Colonic mucosa (tissue), 4 donors: ENCODE measurements at regions of chr5 and their contacts with region 1.

Region 1: GRCh38 chr5:90932052-90932699 is 373.6 kb downstream of the ADGRV1 start:
- DNase-seq: peak; percentile 80
- H3K4me3 ChIP-seq: no peak overlapping the region
- H3K27ac ChIP-seq: no peak overlapping the region
- H3K4me1 ChIP-seq: no peaks in the 10 kb centered on the region
- H3K27me3 ChIP-seq: no peaks in the 10 kb centered on the region
- CTCF ChIP-seq: peak; percentile 73

Region 2: GRCh38 chr5:90866333-90866732 is 65.8 kb before region 1 on chr5:
- intact Hi-C with region 1: loop called (anchors 5 kb)
- DNase-seq: no peak
- H3K4me3 ChIP-seq: no peak overlapping the region
- H3K27ac ChIP-seq: no peak overlapping the region
- H3K4me1 ChIP-seq: no peaks in the 10 kb centered on the region
- H3K27me3 ChIP-seq: no peaks in the 10 kb centered on the region
- CTCF ChIP-seq: peak; percentile 38

Region 3: DNA sequence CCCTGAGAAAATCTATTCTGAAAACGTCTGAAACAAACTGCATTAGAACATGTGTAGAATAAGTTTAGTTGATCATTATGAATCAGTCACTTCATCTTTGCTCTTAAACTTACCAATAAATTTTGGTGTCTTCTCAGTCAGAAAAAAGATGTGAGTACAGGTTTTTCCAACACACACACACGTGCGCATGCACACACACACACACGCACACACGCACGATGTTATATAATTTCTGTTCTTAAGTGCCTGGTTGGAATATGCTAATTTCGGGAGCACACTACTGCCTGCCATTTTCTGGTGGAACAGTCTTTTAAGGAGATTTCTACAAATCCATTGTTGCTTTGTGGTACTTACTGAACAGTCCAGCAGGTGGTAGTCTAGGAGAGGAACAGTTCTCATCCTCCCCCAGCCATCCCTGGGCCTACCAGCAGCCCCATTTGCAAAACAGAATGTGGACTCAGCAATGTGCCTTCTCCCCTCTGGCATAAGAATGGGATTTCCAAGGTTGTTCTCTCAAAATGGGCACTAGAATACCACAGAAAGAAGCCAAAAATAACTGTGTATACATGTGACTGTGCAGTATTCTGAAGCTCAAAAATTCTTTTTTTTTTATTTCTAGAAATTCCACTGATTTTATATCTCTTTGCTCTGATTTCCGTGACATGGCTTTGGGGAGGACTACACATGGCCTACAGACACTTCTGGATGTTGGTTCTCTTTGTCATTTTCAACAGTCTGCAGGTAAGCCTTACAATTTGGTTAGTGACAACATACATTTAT is 169.6 kb after region 1 on chr5:
- intact Hi-C with region 1: loop called (anchors 2 kb)
- DNase-seq: peak; percentile 80
- H3K4me3 ChIP-seq: no peak overlapping the region
- H3K27ac ChIP-seq: no peak overlapping the region
- H3K4me1 ChIP-seq: peaks cover 3% of the 10 kb centered on the region
- H3K27me3 ChIP-seq: no peaks in the 10 kb centered on the region
- CTCF ChIP-seq: peak; percentile 60

Region 4: DNA sequence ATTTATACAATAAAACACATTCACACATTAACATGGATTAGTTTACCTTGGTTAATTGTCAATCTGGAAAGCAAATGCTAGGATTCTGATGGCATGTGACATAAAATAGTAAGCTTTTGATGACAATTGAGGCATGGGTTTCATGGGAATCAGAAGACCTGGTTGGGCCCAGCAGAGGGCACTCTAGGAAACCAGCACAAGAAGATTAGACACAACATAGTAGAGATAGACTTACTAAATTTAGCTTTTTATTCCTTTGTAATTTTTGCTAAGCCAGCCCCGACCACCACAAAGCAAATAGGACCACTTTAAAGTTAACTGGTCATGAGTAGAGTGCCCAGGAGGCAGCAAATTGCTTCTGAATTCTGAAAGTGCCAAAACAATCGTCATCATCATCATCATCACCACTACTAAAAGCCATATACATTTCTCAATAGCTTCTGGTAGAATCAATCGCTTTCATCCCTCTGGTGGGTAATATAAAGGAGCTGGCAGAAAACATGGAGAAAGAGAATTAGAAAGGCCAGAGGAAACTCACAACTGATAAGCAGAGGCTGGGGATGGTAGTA is 287.7 kb after region 1 on chr5:
- intact Hi-C with region 1: loop called (anchors 5 kb)
- DNase-seq: no peak
- H3K4me3 ChIP-seq: no peak overlapping the region
- H3K27ac ChIP-seq: no peak overlapping the region
- H3K4me1 ChIP-seq: peaks cover 4% of the 10 kb centered on the region
- H3K27me3 ChIP-seq: no peaks in the 10 kb centered on the region
- CTCF ChIP-seq: no peak

Region 5: GRCh38 chr5:91380491-91381238 is 448.5 kb after region 1 on chr5:
- intact Hi-C with region 1: loop called (anchors 5 kb)
- DNase-seq: peak; percentile 100
- H3K4me3 ChIP-seq: peak overlapping the region; percentile 81
- H3K27ac ChIP-seq: peak overlapping the region; percentile 100
- H3K4me1 ChIP-seq: peaks cover 11% of the 10 kb centered on the region
- H3K27me3 ChIP-seq: no peaks in the 10 kb centered on the region
- CTCF ChIP-seq: no peak

Region 6: DNA sequence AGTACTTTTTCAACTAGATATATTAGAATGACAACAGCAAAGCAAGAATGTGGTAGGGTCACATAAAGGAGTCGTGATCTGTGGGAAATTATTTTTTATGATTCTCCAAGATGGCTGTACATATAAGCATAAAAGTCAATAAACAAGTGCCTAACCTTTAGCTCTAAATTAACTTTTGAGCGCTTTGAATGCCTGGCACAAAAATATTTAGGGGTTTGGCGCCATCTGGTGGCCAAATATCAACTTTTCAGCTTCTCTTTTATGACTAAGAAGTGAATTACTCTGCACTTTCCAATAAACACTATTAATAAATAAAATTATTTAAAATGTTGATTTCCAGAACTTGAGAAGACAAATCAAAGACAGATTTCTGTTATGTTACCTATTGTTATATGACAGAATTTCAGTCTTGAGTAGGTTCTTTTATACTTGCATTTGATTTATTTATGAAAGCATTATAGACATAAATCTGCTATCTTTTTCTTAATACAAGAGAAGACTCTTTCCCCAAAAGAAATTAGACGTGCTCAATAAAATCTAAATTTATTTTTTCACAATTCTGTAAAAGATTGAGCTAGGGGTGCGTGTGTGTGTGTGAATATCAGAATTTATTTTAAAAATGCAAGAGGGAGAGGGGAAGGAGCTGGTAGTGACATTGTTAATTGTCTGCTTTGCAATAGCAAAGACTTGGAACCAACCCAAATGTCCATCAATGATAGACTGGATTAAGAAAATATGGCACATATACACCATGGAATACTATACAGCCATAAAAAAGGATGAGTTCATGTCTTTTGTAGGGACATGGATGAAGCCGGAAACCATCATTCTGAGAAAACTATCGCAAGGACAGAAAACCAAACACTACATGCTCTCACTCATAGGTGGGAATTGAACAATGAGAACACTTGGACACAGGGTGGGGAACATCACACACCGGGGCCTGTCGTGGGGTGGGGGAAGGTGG is 487.7 kb after region 1 on chr5:
- intact Hi-C with region 1: loop called (anchors 10 kb)
- DNase-seq: peak; percentile 74
- H3K4me3 ChIP-seq: no peak overlapping the region
- H3K27ac ChIP-seq: no peak overlapping the region
- H3K4me1 ChIP-seq: no peaks in the 10 kb centered on the region
- H3K27me3 ChIP-seq: no peaks in the 10 kb centered on the region
- CTCF ChIP-seq: peak; percentile 79